Naive thymus-derived CD4-positive, alpha-beta T cell (primary cell): ENCODE measurements at regions of chr10 and their contacts with region 1.

Region 1: GRCh38 chr10:29735596-29736318 is 101.0 kb upstream of the SVIL start:
- DNase-seq: peak; percentile 58 to 90 (median 74)
- ATAC-seq: peak; percentile 88
- H3K4me3 ChIP-seq: peak overlapping the region; percentile 71
- H3K4me3 Mint-ChIP-seq: peak overlapping the region; percentile 74 to 97 (median 85)
- H3K27ac ChIP-seq: peak overlapping the region; percentile 71
- H3K27ac Mint-ChIP-seq: peak overlapping the region in 5 of 9 donors; percentile 32 to 82 (median 80)
- H3K4me1 ChIP-seq: peaks cover 3 to 23% of the 10 kb centered on the region in 2 donors
- H3K4me1 Mint-ChIP-seq: peaks cover 23 to 50% (median 40%) of the 10 kb centered on the region in 7 donors
- H3K27me3 ChIP-seq: no peaks in the 10 kb centered on the region
- H3K27me3 Mint-ChIP-seq: peaks cover 0 to 44% (median 0%) of the 10 kb centered on the region in 5 donors

Region 2: GRCh38 chr10:28676968-28677887 is 1058.5 kb before region 1 on chr10 and contains the start of gene BAMBI:
- CTCF ChIA-PET with region 1: no interaction called
- POLR2A ChIA-PET with region 1: no interaction called
- intact Hi-C with region 1: loop called in 1 of 2 experiments (anchors 10 kb)
- DNase-seq: peak; percentile 86 to 95 (median 90)
- ATAC-seq: peak; percentile 97
- H3K4me3 ChIP-seq: peak within 1 kb of the TSS; percentile 57
- H3K4me3 Mint-ChIP-seq: peak within 1 kb of the TSS; percentile 79 to 94 (median 84)
- H3K27ac ChIP-seq: no peak within 1 kb of the TSS
- H3K27ac Mint-ChIP-seq: peak within 1 kb of the TSS in 3 of 9 donors; percentile 24 to 52 (median 43)
- H3K4me1 ChIP-seq: peaks cover 0 to 26% of the 10 kb centered on the region in 2 donors
- H3K4me1 Mint-ChIP-seq: peaks cover 19 to 32% (median 26%) of the 10 kb centered on the region in 7 donors
- H3K27me3 ChIP-seq: peaks cover 11 to 20% of the 10 kb centered on the region in 2 donors
- H3K27me3 Mint-ChIP-seq: peaks cover 63 to 80% (median 70%) of the 10 kb centered on the region in 5 donors
- total RNA-seq, gene BAMBI: 0.12 to 1.6 (median 0.80) TPM in 4 of 5 experiments, not detected in the other

Region 3: DNA sequence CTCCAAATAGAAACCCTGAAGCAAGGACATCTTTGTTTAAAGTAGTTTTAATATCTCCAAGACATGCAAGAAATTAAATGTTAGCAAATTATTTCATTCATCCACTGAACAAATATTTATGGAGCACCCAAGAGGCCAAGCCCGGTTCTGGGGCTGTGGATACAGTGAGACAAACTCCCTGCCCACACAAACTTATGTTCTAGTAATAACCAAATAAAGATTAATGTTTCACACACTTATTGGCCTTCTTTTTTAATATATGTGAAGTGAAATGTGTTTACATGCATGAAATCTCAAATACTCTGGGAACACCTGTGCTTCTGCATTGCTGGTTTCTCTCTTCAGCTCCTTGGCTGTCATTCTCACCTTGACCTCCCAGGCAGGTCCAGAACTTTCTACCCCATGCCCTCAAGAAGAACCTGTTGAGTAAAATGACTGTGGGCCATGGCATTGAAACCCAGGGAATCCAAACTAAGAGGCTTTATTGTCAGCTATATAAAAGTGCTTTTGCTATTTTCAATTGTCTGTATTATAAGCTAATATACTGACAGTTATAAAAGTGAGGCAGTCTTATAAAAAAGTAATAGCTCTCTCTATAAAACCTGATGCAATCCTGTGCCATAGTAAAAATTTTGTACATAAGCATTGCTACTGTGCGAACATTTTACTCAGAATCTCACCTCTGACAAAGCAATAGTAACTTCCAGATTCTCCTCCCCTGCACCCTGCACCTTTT is 144.7 kb before region 1 on chr10:
- CTCF ChIA-PET with region 1: interaction called, 15 read pairs
- POLR2A ChIA-PET with region 1: no interaction called
- intact Hi-C with region 1: loop called in 1 of 2 experiments (anchors 1 kb)
- DNase-seq: no peak
- ATAC-seq: no peak
- H3K4me3 ChIP-seq: no peak overlapping the region
- H3K4me3 Mint-ChIP-seq: peak overlapping the region in 3 of 10 donors; percentile 2 to 55 (median 41)
- H3K27ac ChIP-seq: no peak overlapping the region
- H3K27ac Mint-ChIP-seq: peak overlapping the region in 3 of 9 donors; percentile 6 to 24 (median 10)
- H3K4me1 ChIP-seq: peaks cover 0 to 7% of the 10 kb centered on the region in 2 donors
- H3K4me1 Mint-ChIP-seq: peaks cover 8 to 21% (median 11%) of the 10 kb centered on the region in 7 donors
- H3K27me3 ChIP-seq: no peaks in the 10 kb centered on the region
- H3K27me3 Mint-ChIP-seq: no peaks in the 10 kb centered on the region

Region 4: GRCh38 chr10:29648114-29648982 is 87.4 kb before region 1 on chr10:
- CTCF ChIA-PET with region 1: interaction called, 4 read pairs
- POLR2A ChIA-PET with region 1: interaction called, 5 read pairs
- intact Hi-C with region 1: loop called in 1 of 2 experiments (anchors 1 kb)
- DNase-seq: peak in 7 of 9 donors; percentile 19 to 45 (median 31)
- ATAC-seq: peak; percentile 60
- H3K4me3 ChIP-seq: no peak overlapping the region
- H3K4me3 Mint-ChIP-seq: peak overlapping the region; percentile 21 to 93 (median 72)
- H3K27ac ChIP-seq: no peak overlapping the region
- H3K27ac Mint-ChIP-seq: peak overlapping the region; percentile 68 to 92 (median 76)
- H3K4me1 ChIP-seq: peaks cover 0 to 25% of the 10 kb centered on the region in 2 donors
- H3K4me1 Mint-ChIP-seq: peaks cover 27 to 75% (median 65%) of the 10 kb centered on the region in 7 donors
- H3K27me3 ChIP-seq: no peaks in the 10 kb centered on the region
- H3K27me3 Mint-ChIP-seq: peaks cover 0 to 19% (median 0%) of the 10 kb centered on the region in 5 donors

Region 5: DNA sequence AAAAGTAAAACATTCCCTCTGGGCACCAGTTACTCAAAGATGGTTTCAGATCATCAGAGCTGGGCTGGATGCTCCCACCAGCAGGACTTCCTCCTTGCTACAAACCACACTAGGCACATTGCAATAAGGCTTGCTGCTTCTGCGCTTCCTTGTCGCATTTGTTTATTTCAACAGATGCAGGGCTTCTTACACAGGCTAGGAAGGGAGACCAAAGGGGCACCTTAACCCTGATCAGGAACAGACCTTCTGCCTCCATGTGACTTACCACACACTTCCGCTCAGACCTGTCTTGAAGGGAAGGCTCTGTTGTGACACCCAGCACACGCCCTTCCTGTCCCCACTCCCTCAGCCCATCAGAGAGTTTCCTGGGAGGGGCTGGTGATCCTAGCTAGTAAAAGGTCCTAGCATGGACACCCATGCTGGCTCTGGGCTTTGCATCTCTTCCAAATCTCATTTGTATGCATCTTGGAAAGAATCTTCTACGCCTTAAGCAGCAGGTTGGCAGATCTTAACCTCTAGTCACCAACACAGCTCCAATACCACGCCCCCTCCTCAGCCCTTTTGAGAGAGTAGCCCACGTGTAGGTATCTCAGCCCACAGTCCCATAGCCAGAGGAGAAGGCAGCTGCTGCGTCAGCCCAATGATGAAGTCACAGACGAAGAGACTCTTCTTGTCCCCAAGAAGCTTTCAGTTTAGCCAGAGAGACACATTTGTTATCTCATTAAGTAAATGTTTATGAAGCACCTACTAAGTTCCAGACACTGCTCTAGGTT is 53.9 kb before region 1 on chr10:
- CTCF ChIA-PET with region 1: interaction called, 4 read pairs
- POLR2A ChIA-PET with region 1: interaction called, 24 read pairs
- intact Hi-C with region 1: loop called (anchors 1 to 2 kb)
- DNase-seq: peak; percentile 28 to 90 (median 82)
- ATAC-seq: peak; percentile 98
- H3K4me3 ChIP-seq: peak overlapping the region; percentile 29
- H3K4me3 Mint-ChIP-seq: peak overlapping the region; percentile 58 to 89 (median 83)
- H3K27ac ChIP-seq: peak overlapping the region; percentile 71
- H3K27ac Mint-ChIP-seq: peak overlapping the region; percentile 76 to 99 (median 98)
- H3K4me1 ChIP-seq: peaks cover 46 to 65% of the 10 kb centered on the region in 2 donors
- H3K4me1 Mint-ChIP-seq: peaks cover 42 to 100% (median 92%) of the 10 kb centered on the region in 7 donors
- H3K27me3 ChIP-seq: no peaks in the 10 kb centered on the region
- H3K27me3 Mint-ChIP-seq: no peaks in the 10 kb centered on the region

Region 6: DNA sequence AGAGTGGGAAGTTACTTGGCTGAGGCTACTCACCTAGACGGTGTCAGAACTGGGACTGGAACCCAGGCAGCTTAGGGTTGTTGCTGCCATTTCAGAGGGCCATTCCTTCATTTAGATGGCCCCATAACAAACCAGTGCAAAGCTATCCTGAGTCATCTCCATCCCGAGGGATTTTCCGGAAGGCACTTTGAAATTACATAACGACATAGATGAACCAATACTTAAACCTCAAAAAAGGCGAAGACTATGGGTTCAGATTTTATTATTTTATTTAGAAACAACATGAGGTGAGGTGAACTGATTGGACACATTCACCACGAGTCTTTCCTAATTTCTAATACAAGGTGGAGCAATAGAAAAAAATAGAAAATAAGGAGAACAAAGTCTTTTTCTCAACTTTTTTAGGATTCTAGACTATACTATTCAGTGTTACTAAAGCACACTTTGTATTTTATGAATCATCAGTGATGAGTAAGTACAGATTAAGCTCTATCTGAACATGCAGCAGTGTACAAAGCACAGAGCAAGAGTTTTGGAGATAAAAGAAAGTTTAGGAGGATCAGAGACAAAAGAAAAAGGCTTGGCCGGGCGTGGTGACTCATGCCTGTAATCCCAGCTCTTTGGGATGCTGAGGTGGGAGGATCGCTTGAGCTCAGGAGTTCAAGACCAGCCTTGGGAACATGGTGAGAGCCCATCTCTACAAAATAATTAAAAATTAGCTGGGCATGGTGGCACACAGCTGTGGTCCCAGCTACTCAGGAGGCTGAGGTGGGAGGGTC is 21.5 kb before region 1 on chr10:
- CTCF ChIA-PET with region 1: interaction called, 3 read pairs
- POLR2A ChIA-PET with region 1: interaction called, 3 read pairs
- intact Hi-C with region 1: loop called in 1 of 2 experiments (anchors 2 kb)
- DNase-seq: no peak
- ATAC-seq: no peak
- H3K4me3 ChIP-seq: no peak overlapping the region
- H3K4me3 Mint-ChIP-seq: peak overlapping the region in 5 of 10 donors; percentile 20 to 67 (median 52)
- H3K27ac ChIP-seq: no peak overlapping the region
- H3K27ac Mint-ChIP-seq: peak overlapping the region in 2 of 9 donors; percentile 25 to 36
- H3K4me1 ChIP-seq: peaks cover 0 to 6% of the 10 kb centered on the region in 2 donors
- H3K4me1 Mint-ChIP-seq: peaks cover 0 to 66% (median 44%) of the 10 kb centered on the region in 7 donors
- H3K27me3 ChIP-seq: no peaks in the 10 kb centered on the region
- H3K27me3 Mint-ChIP-seq: no peaks in the 10 kb centered on the region

Region 7: DNA sequence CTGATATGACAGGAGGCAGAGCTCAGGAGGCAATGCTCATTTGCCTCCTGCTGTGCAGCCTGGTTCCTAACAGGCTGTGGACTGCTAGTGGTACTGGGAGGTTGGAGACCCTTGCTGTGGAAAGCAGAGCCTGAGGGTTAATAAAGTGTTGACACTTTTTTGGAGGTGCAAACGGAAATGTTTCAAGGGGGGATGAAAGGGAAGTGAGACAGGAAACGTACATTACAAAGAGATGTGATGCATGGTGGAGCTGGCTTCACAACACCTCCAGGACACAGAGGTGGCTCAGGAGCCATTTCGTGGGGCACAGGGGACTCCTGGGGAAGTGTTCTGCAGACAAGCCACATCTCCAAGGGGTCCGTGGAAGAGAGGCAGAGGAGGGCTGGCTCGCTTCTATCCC is 36.6 kb after region 1 on chr10:
- CTCF ChIA-PET with region 1: no interaction called
- POLR2A ChIA-PET with region 1: no interaction called
- intact Hi-C with region 1: no loop called
- DNase-seq: peak in 5 of 9 donors; percentile 11 to 20 (median 12)
- ATAC-seq: no peak
- H3K4me3 ChIP-seq: no peak overlapping the region
- H3K4me3 Mint-ChIP-seq: peak overlapping the region in 7 of 10 donors; percentile 44 to 61 (median 48)
- H3K27ac ChIP-seq: no peak overlapping the region
- H3K27ac Mint-ChIP-seq: peak overlapping the region in 6 of 9 donors; percentile 6 to 73 (median 32)
- H3K4me1 ChIP-seq: peaks cover 5 to 6% of the 10 kb centered on the region in 2 donors
- H3K4me1 Mint-ChIP-seq: peaks cover 9 to 19% (median 14%) of the 10 kb centered on the region in 7 donors
- H3K27me3 ChIP-seq: no peaks in the 10 kb centered on the region
- H3K27me3 Mint-ChIP-seq: peaks cover 0 to 23% (median 10%) of the 10 kb centered on the region in 5 donors

Region 8: DNA sequence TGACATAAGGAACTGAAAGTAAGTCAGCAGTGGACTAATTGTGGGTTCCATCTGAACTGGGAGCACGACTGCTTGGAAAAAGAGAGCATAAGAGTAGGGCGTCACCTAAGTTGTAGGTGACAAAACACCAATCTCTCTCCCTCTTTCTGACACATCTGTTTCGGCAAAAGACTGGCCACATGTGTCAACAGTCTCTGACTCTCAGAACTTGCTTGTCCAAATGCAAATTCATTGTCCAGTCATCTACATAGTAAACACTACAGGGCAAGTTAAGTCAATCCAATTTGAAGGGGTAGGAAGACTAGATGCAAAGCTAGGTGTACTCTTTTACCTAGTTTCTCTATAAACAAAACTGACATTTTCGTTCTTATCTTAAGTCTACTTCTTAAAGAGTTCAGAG is 1208.2 kb after region 1 on chr10:
- CTCF ChIA-PET with region 1: no interaction called
- POLR2A ChIA-PET with region 1: no interaction called
- intact Hi-C with region 1: no loop called
- DNase-seq: no peak
- ATAC-seq: no peak
- H3K4me3 ChIP-seq: no peak overlapping the region
- H3K4me3 Mint-ChIP-seq: no peak overlapping the region
- H3K27ac ChIP-seq: no peak overlapping the region
- H3K27ac Mint-ChIP-seq: no peak overlapping the region
- H3K4me1 ChIP-seq: no peaks in the 10 kb centered on the region
- H3K4me1 Mint-ChIP-seq: peaks cover 0 to 12% (median 6%) of the 10 kb centered on the region in 7 donors
- H3K27me3 ChIP-seq: no peaks in the 10 kb centered on the region
- H3K27me3 Mint-ChIP-seq: no peaks in the 10 kb centered on the region